ENCODE measurements at regions of chr20 and their contacts with region 1.

Region 1: GRCh38 chr20:50460460-50461267 is 49.5 kb upstream of the PTPN1 start:
- DNase-seq: peak; percentile 91 to 95
- ATAC-seq: peak; percentile 89 to 94 (median 91)
- H3K4me3 ChIP-seq: no peak overlapping the region
- H3K27ac ChIP-seq: peak overlapping the region; percentile 71
- H3K4me1 ChIP-seq: peaks cover 19% of the 10 kb centered on the region
- H3K27me3 ChIP-seq: no peaks in the 10 kb centered on the region
- CTCF ChIP-seq: peak; percentile 93

Region 2: GRCh38 chr20:50115591-50116372 is 344.9 kb before region 1 on chr20:
- intact Hi-C with region 1: loop called in 1 of 2 experiments (anchors 10 kb)
- DNase-seq: peak; percentile 96 to 98
- ATAC-seq: peak; percentile 78 to 85 (median 84)
- H3K4me3 ChIP-seq: peak overlapping the region; percentile 75
- H3K27ac ChIP-seq: peak overlapping the region; percentile 97
- H3K4me1 ChIP-seq: peaks cover 45% of the 10 kb centered on the region
- H3K27me3 ChIP-seq: no peaks in the 10 kb centered on the region
- CTCF ChIP-seq: no peak

Region 3: DNA sequence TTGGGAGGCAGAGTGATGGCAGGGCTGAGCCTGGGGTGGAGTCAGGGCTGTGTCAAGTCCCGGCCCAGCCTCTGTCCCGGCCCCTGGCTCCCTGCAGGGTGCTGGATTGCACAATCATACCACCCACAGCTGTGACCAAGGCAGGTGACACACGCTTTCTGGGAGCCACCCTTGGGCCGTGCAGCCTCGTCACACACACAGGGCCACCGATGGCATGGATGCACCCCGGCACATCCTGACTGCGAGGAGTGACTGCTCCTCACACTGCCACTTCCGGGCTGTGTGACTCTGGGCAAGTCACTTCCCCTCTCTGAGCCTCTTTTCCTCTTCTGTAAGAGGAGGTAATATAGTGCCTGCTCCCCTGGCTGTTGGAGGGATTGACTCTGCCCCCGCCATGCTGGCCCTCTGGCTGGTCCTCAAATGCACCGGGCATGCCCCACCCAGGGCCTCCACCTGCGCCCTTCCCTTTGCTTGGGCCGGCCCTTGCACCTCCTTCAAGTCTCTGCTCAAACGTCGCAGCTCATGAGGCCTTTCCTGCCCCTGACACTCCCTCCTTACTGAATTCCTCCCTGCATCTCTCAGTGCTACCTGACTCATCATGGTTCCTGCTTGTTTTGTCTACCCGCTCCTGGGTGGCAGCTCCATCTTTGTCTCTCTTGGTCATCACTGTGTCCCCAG is 176.6 kb before region 1 on chr20:
- intact Hi-C with region 1: loop called in 1 of 2 experiments (anchors 5 kb)
- DNase-seq: peak; percentile 74 to 84
- ATAC-seq: peak; percentile 38 to 69 (median 62)
- H3K4me3 ChIP-seq: no peak overlapping the region
- H3K27ac ChIP-seq: peak overlapping the region; percentile 82
- H3K4me1 ChIP-seq: peaks cover 47% of the 10 kb centered on the region
- H3K27me3 ChIP-seq: no peaks in the 10 kb centered on the region
- CTCF ChIP-seq: no peak

Region 4: GRCh38 chr20:50379049-50379990 is 81.3 kb before region 1 on chr20:
- intact Hi-C with region 1: loop called in 1 of 2 experiments (anchors 2 kb)
- DNase-seq: peak; percentile 95 to 98
- ATAC-seq: peak; percentile 81 to 86 (median 82)
- H3K4me3 ChIP-seq: peak overlapping the region; percentile 59
- H3K27ac ChIP-seq: peak overlapping the region; percentile 94
- H3K4me1 ChIP-seq: peaks cover 37% of the 10 kb centered on the region
- H3K27me3 ChIP-seq: no peaks in the 10 kb centered on the region
- CTCF ChIP-seq: no peak

Region 5: DNA sequence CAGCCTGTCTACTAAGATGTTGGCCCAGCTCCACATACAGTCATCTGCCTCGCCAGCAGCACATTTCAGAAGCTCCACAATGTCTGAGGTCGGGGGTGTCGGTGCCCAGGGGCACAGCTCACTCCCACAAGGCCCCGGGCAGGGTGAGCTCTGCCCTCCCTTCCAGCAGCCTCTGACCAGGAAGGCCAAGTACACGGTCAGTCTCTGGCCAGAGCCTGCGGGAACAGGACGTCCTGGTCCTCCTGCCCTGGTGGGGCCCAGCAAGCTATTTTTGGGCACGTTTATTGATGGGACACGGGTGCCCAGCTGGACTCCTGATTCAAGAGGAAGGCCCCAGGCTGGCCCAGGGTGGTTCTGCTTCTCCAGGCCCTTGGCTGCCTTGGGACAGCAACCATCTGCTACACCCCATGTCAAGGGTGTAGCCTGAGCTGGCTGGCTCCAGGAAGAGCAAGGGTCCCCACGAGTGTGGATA is 65.4 kb before region 1 on chr20:
- intact Hi-C with region 1: loop called (anchors 2 kb)
- DNase-seq: peak; percentile 90 to 97
- ATAC-seq: peak; percentile 53 to 79 (median 74)
- H3K4me3 ChIP-seq: no peak overlapping the region
- H3K27ac ChIP-seq: peak overlapping the region; percentile 97
- H3K4me1 ChIP-seq: peaks cover 56% of the 10 kb centered on the region
- H3K27me3 ChIP-seq: no peaks in the 10 kb centered on the region
- CTCF ChIP-seq: no peak

Region 6: GRCh38 chr20:50575847-50576720 is 115.4 kb after region 1 on chr20:
- intact Hi-C with region 1: loop called in 1 of 2 experiments (anchors 5 kb)
- DNase-seq: peak; percentile 70 to 83
- ATAC-seq: peak; percentile 43 to 60 (median 46)
- H3K4me3 ChIP-seq: no peak overlapping the region
- H3K27ac ChIP-seq: peak overlapping the region; percentile 92
- H3K4me1 ChIP-seq: peaks cover 58% of the 10 kb centered on the region
- H3K27me3 ChIP-seq: no peaks in the 10 kb centered on the region
- CTCF ChIP-seq: peak; percentile 75

Region 7: DNA sequence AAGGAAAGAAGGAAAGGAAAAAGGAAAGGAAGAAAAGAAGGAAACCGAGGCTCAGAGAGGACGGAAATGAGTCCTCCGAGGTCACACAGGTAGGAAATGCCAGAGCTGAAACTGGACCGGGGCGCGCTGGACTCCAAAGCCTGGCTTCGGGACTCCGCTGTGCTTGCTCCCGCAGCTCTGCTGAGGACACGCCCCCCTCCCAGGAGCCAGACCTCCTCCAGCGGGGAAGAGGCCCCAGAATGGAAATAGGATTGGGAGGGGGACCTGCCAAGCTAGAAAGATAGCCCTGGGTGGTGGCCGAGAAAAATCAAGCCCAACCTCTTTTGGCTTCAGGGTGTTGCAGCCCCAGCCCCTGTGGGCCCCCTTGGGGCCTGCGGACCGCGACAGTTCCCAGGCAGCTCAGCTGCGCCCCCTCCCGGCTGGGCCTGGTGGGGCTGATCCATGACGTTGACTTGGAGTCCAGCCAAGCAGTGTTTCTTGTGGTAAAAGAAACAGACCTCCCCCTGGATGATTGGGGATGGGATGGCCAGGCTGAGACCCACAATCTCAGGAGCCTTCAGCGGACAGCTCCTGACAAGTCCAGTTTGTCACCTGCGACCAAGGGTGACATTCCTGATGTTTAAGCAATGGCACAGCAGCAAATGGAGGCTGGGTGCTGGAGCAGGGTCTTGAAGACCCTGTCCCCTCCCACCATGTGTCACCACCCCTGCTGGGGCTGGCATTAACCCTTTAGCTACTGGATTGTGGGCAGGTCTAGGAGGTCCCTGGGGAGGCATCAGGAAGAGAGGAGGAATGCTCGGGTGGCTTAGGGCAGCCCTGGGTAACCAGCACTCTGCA is 175.2 kb after region 1 on chr20:
- intact Hi-C with region 1: no loop called
- DNase-seq: peak; percentile 68 to 88
- ATAC-seq: peak; percentile 78 to 91 (median 84)
- H3K4me3 ChIP-seq: peak overlapping the region; percentile 49
- H3K27ac ChIP-seq: no peak overlapping the region
- H3K4me1 ChIP-seq: peaks cover 16% of the 10 kb centered on the region
- H3K27me3 ChIP-seq: no peaks in the 10 kb centered on the region
- CTCF ChIP-seq: peak; percentile 88

Region 8: GRCh38 chr20:50713657-50714101 is 253.0 kb after region 1 on chr20:
- intact Hi-C with region 1: no loop called
- DNase-seq: no peak
- ATAC-seq: peak in 2 of 4 donors; percentile 39 to 40
- H3K4me3 ChIP-seq: no peak overlapping the region
- H3K27ac ChIP-seq: no peak overlapping the region
- H3K4me1 ChIP-seq: peaks cover 8% of the 10 kb centered on the region
- H3K27me3 ChIP-seq: no peaks in the 10 kb centered on the region
- CTCF ChIP-seq: peak; percentile 15